Spleen (tissue), 13 donors: ENCODE measurements at regions of chr17 and their contacts with region 1.

Region 1: DNA sequence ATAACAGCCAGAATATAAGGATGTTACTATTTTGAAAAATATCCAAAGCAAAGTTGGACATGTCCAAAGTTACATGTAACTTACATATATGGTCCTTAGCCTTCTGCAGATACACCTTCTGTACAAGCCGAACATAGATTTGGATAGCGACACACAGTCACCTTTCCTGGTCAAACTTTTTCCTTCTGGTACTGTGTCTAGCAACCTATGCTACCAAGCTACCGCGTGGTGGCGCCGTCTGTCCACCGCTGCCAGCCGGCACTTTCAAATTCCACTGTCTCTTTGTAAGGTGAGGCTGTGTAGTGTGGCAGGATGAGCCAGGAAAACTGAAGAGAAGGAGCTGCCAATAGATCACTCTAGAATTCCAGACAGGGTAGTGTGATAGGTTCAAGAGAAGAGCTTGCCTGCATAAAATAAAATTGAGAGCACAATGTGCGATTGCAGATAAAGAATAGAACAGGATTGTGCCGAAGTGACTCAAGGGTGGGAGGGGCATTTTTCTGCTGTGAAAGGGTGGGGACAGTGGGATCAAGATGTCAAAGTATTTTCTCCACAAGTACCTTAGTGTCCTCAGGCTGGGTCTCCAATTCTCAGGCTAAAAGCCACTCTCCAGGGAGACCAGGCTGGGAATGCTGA is 366.9 kb downstream of the SLC39A11 start:
- DNase-seq: peak; percentile 82
- H3K4me3 ChIP-seq: no peak overlapping the region
- H3K27ac ChIP-seq: no peak overlapping the region
- H3K4me1 ChIP-seq: peaks cover 5 to 31% (median 14%) of the 10 kb centered on the region in 6 donors
- H3K27me3 ChIP-seq: no peaks in the 10 kb centered on the region
- CTCF ChIP-seq: peak in 10 of 11 experiments; percentile 28 to 76 (median 63)
- POLR2A ChIP-seq: no peak

Region 2: GRCh38 chr17:72661093-72661944 is 64.2 kb before region 1 on chr17:
- intact Hi-C with region 1: no loop called
- DNase-seq: no peak
- H3K4me3 ChIP-seq: no peak overlapping the region
- H3K27ac ChIP-seq: no peak overlapping the region
- H3K4me1 ChIP-seq: no peaks in the 10 kb centered on the region
- H3K27me3 ChIP-seq: no peaks in the 10 kb centered on the region
- CTCF ChIP-seq: no peak
- POLR2A ChIP-seq: no peak

Region 3: DNA sequence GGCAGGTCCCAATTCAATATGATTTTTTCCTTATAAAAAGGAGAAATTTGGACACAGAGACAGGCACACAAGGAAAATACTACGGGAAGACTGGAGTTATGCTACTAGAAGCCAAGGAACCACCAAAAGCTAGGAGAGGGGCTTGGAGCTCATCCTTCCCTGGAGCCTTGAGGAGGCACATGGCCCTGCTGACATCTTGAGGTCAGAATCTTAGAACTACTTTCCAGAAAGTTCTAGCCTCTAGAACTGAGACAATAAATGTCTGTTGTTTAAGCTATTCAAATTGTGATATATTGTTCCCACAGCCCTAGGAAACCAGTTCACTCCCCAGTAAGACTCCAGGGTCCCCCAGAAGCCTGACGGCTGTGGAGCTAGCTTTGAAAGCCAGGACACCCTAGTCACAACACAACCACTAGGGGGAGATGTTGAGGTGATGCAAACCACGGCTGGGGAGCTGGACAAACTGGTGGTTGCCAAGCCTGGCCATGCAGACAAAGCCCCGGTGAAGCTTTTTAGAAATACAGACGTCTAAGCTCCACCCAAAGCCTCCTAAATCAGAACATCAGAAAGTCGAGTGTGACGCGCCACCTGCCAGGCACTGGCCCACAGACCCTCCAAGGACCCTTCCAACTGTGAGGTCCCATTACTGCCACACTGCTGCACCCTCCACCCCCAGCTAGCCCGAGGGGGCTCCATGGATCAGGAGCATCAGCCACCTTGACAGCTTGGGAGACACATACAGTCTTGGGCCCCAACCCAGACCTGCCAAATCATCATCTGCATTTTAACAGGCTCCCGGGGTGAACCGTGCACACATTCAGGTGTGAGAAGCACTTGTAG is 260.6 kb after region 1 on chr17:
- intact Hi-C with region 1: loop called (anchors 10 kb)
- DNase-seq: peak; percentile 80
- H3K4me3 ChIP-seq: no peak overlapping the region
- H3K27ac ChIP-seq: peak overlapping the region in 1 of 8 donors; percentile 4
- H3K4me1 ChIP-seq: peaks cover 0 to 15% (median 5%) of the 10 kb centered on the region in 6 donors
- H3K27me3 ChIP-seq: no peaks in the 10 kb centered on the region
- CTCF ChIP-seq: peak; percentile 40 to 89 (median 74)
- POLR2A ChIP-seq: no peak

Region 4: GRCh38 chr17:73156166-73156840 is 430.8 kb after region 1 on chr17:
- intact Hi-C with region 1: loop called (anchors 5 kb)
- DNase-seq: peak; percentile 89
- H3K4me3 ChIP-seq: no peak overlapping the region
- H3K27ac ChIP-seq: peak overlapping the region in 2 of 8 donors; percentile 8 to 40
- H3K4me1 ChIP-seq: peaks cover 3 to 25% (median 8%) of the 10 kb centered on the region in 6 donors
- H3K27me3 ChIP-seq: peaks cover 0 to 28% (median 0%) of the 10 kb centered on the region in 7 donors
- CTCF ChIP-seq: peak; percentile 56 to 82 (median 67)
- POLR2A ChIP-seq: no peak

Region 5: GRCh38 chr17:73255671-73256181 is 530.2 kb after region 1 on chr17:
- intact Hi-C with region 1: loop called (anchors 10 kb)
- DNase-seq: peak; percentile 83
- H3K4me3 ChIP-seq: no peak overlapping the region
- H3K27ac ChIP-seq: no peak overlapping the region
- H3K4me1 ChIP-seq: peaks cover 0 to 10% (median 6%) of the 10 kb centered on the region in 6 donors
- H3K27me3 ChIP-seq: no peaks in the 10 kb centered on the region
- CTCF ChIP-seq: peak; percentile 89 to 96 (median 94)
- POLR2A ChIP-seq: no peak